Activated CD4-positive, alpha-beta memory T cell treated with anti-CD3 and anti-CD28 coated beads for 36 hours (primary cell): ENCODE measurements at regions of chr16 and their contacts with region 1.

Region 1: GRCh38 chr16:53435066-53435688 is 906 bp downstream of the RBL2 start:
- DNase-seq: peak; percentile 70
- H3K4me3 Mint-ChIP-seq: peak overlapping the region; percentile 90
- H3K27ac Mint-ChIP-seq: peak overlapping the region; percentile 92
- H3K4me1 Mint-ChIP-seq: peaks cover 44% of the 10 kb centered on the region
- H3K27me3 Mint-ChIP-seq: no peaks in the 10 kb centered on the region

Region 2: GRCh38 chr16:53372992-53373871 is 61.9 kb before region 1 on chr16:
- CTCF ChIA-PET with region 1: no interaction called
- POLR2A ChIA-PET with region 1: no interaction called
- intact Hi-C with region 1: loop called (anchors 1 kb)
- DNase-seq: peak; percentile 86
- H3K4me3 Mint-ChIP-seq: peak overlapping the region; percentile 78
- H3K27ac Mint-ChIP-seq: no peak overlapping the region
- H3K4me1 Mint-ChIP-seq: peaks cover 15% of the 10 kb centered on the region
- H3K27me3 Mint-ChIP-seq: no peaks in the 10 kb centered on the region

Region 3: DNA sequence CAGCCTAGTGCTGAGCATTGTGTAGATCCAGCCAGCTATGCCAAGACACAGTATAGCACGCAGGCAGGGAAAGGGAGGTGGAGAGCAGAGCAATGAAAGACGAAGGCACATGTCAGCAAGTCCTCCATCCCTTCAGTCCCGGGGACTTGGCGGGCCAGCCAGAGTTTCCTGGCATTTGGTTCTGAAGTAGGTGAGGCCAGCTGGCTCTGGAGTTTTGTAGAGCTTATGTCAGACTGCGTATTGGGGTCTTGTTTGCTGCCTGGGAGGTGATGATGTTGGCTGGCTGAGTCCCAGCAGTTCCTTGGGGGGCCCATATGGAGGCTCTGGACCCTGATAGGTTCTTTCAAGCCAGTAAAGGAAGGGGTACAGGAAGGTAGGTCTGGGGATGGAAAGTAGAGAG is 123.5 kb after region 1 on chr16:
- CTCF ChIA-PET with region 1: no interaction called
- POLR2A ChIA-PET with region 1: no interaction called
- intact Hi-C with region 1: no loop called
- DNase-seq: no peak
- H3K4me3 Mint-ChIP-seq: no peak overlapping the region
- H3K27ac Mint-ChIP-seq: no peak overlapping the region
- H3K4me1 Mint-ChIP-seq: no peaks in the 10 kb centered on the region
- H3K27me3 Mint-ChIP-seq: no peaks in the 10 kb centered on the region

Region 4: GRCh38 chr16:53703590-53704444 is 268.6 kb after region 1 on chr16 and contains the starts of genes FTO and RPGRIP1L:
- CTCF ChIA-PET with region 1: no interaction called
- POLR2A ChIA-PET with region 1: interaction called, 3 read pairs
- intact Hi-C with region 1: loop called (anchors 2 kb)
- DNase-seq: peak; percentile 99
- H3K4me3 Mint-ChIP-seq: peak within 1 kb of the TSS; percentile 99
- H3K27ac Mint-ChIP-seq: peak within 1 kb of the TSS; percentile 91
- H3K4me1 Mint-ChIP-seq: peaks cover 34% of the 10 kb centered on the region
- H3K27me3 Mint-ChIP-seq: no peaks in the 10 kb centered on the region
- total RNA-seq, gene FTO: 50.7 to 53.1 TPM
- total RNA-seq, gene RPGRIP1L: 6.2 to 6.5 TPM